ENCODE measurements at regions of chr20 and their contacts with region 1.

Region 1: GRCh38 chr20:32336918-32337347 is 21.2 kb upstream of the ASXL1 start:
- DNase-seq: no peak
- H3K4me3 ChIP-seq: no peak overlapping the region
- H3K27ac ChIP-seq: no peak overlapping the region
- H3K27me3 ChIP-seq: no peaks in the 10 kb centered on the region
- CTCF ChIP-seq: peak; percentile 76

Region 2: GRCh38 chr20:32807706-32808105 is 470.8 kb after region 1 on chr20:
- CTCF ChIA-PET with region 1: no interaction called
- POLR2A ChIA-PET with region 1: interaction called, 10 read pairs
- DNase-seq: no peak
- H3K4me3 ChIP-seq: no peak overlapping the region
- H3K27ac ChIP-seq: no peak overlapping the region
- H3K27me3 ChIP-seq: no peaks in the 10 kb centered on the region
- CTCF ChIP-seq: no peak

Region 3: GRCh38 chr20:32982617-32983458 is 645.9 kb after region 1 on chr20:
- CTCF ChIA-PET with region 1: no interaction called
- POLR2A ChIA-PET with region 1: no interaction called
- DNase-seq: no peak
- H3K4me3 ChIP-seq: no peak overlapping the region
- H3K27ac ChIP-seq: no peak overlapping the region
- H3K27me3 ChIP-seq: peaks cover 4% of the 10 kb centered on the region
- CTCF ChIP-seq: no peak